ENCODE measurements at regions of chr5 and their contacts with region 1.

Region 1: DNA sequence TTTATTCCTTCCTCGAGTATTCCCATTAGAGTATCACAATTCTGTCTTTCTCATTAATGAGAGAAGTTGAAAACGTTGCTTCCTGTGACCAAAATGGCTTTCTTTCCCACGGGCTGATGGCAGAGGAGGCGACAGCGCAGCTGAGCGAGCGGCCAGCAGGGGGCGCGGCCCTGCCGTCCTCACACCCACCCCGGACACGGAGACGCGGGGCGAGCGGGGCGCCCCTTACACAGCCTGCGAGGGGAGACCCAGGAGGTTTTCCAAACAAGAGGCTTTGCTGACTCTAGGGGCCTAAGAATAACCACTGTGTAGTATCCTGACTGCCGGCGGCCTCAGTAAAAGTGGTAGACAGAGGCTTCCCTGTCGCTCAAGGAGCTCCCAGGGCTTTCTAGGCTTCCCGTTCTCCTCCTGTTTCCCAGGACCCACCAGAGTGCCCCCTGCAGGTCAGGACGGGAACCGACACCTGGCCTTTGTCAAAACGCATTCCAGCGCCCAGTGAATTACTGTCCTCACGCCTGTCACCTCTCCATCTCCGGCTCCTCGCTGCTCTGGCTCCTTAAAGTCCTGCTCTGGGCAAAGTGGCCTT is 27.3 kb upstream of the FGF1 start:
- H3K4me3 ChIP-seq: peak overlapping the region; percentile 59
- H3K27ac ChIP-seq: peak overlapping the region; percentile 28; the same call in 1 of the 2 replicates
- H3K4me1 ChIP-seq: no peaks in the 10 kb centered on the region
- CTCF ChIP-seq: peak; percentile 97

Region 2: DNA sequence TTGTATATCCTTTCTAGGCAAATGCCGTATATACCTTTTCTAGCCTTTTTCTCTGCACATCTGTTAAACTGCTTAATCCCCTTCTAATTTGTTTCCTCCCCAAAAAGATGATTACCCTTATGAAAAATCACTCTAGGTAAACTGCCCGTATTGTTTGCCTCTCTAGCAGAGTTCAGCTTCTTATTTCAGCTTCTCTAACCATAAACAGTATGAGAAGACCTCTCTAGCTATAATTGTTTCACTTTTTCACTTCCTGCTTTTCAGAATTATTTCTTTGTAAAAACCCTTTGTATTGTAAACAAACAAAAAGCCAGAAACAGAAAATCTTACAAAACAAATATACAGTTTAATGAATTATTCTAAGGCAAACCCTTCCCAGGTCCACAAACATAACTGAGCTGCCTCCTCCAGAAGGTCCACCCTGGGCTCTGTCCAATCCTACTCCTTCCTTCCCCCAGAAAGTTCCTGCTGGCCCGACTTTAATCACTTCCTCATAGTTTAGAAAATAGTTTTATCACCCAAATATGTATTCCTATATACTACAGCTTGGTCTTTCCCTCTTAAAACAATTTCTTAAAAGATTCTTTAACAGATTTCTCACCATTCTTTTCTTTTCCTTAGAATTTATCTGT is 185.4 kb before region 1 on chr5:
- CTCF ChIA-PET with region 1: no interaction called
- POLR2A ChIA-PET with region 1: no interaction called
- H3K4me3 ChIP-seq: no peak overlapping the region
- H3K27ac ChIP-seq: no peak overlapping the region
- H3K4me1 ChIP-seq: no peaks in the 10 kb centered on the region
- CTCF ChIP-seq: no peak

Region 3: DNA sequence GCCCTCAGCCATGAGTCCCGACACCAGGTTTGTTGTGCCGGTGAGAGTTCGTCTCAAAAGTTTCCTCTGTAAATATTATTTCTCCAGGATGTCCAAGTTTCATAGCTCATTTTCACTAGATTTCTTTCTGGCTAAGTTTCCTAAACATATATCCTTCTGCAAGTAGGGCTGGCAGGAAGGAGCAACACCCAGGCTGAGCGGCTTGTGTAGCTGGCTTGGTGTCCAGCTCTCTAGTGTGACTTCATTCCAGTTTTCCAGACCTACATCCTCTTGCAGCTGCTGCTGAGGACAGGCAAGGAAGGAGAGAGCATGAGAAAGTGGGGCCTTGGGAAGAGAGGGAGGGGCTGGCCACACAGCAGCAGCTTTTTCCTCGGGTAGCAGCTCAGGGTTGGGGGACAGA is 107.6 kb before region 1 on chr5:
- CTCF ChIA-PET with region 1: interaction called, 16 read pairs
- POLR2A ChIA-PET with region 1: no interaction called
- H3K4me3 ChIP-seq: no peak overlapping the region
- H3K27ac ChIP-seq: no peak overlapping the region
- H3K4me1 ChIP-seq: peaks cover 7% of the 10 kb centered on the region
- CTCF ChIP-seq: no peak

Region 4: GRCh38 chr5:142655339-142656267 is 57.6 kb before region 1 on chr5:
- CTCF ChIA-PET with region 1: interaction called, 44 read pairs
- POLR2A ChIA-PET with region 1: interaction called, 4 read pairs
- H3K4me3 ChIP-seq: no peak overlapping the region
- H3K27ac ChIP-seq: no peak overlapping the region
- H3K4me1 ChIP-seq: no peaks in the 10 kb centered on the region
- CTCF ChIP-seq: peak; percentile 90

Region 5: DNA sequence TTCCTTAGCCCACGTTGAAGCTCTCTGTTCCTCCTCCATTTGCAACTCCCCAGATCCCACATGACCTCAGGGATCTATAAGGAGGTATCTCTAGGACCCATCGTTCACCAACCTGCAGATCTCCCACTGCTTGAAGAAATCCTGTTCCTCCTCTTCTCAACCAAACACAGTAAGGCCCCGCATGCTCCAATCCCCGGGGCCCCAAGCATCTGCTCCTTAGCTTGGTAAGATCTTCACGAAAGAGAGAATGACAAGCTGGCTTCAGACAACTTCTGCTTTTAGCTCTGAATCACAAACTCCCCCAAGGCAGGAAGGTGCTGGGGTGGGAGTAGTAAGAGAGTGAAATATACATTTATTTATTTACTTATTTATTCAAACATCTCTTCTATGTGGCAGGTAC is 24.0 kb after region 1 on chr5:
- CTCF ChIA-PET with region 1: interaction called, 70 read pairs
- POLR2A ChIA-PET with region 1: no interaction called
- H3K4me3 ChIP-seq: no peak overlapping the region
- H3K27ac ChIP-seq: no peak overlapping the region
- H3K4me1 ChIP-seq: peaks cover 6% of the 10 kb centered on the region; the same call in 1 of the 2 replicates
- CTCF ChIP-seq: no peak

Region 6: DNA sequence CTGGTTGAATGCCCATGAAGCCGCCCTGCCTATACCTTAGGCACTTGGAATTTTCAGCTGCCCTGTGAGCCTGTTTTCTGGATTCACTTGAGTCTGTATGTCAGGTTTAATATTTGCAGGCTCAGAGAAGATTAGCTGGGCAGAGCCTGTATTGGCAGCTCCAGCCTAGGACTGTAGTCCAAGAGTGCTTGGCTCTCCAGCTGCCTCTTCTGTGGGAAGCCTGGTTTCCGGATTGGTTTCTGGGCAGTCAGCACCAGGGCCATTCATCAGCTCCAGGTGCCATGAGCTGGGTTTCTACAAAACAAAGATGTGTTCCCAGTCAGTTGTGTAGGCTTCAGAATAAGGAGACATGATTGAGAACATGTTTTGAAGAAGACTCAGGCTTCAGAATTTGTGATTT is 147.1 kb after region 1 on chr5:
- CTCF ChIA-PET with region 1: interaction called, 12 read pairs
- POLR2A ChIA-PET with region 1: no interaction called
- H3K4me3 ChIP-seq: no peak overlapping the region
- H3K27ac ChIP-seq: no peak overlapping the region
- H3K4me1 ChIP-seq: no peaks in the 10 kb centered on the region
- CTCF ChIP-seq: no peak

Region 7: GRCh38 chr5:142906863-142907671 is 193.9 kb after region 1 on chr5:
- CTCF ChIA-PET with region 1: interaction called, 16 read pairs
- POLR2A ChIA-PET with region 1: no interaction called
- H3K4me3 ChIP-seq: no peak overlapping the region
- H3K27ac ChIP-seq: no peak overlapping the region
- H3K4me1 ChIP-seq: no peaks in the 10 kb centered on the region
- CTCF ChIP-seq: no peak

Measured in HEK293 (cell line).